ENCODE measurements at regions of chr2 and their contacts with region 1.

Region 1: GRCh38 chr2:61538200-61538919 is at the start of gene XPO1:
- DNase-seq: peak; percentile 94 to 100 (median 99)
- ATAC-seq: peak; percentile 74
- H3K4me3 ChIP-seq: peak within 1 kb of the TSS; percentile 83 to 92
- H3K4me3 Mint-ChIP-seq: peak within 1 kb of the TSS; percentile 92
- H3K27ac ChIP-seq: peak within 1 kb of the TSS; percentile 100
- H3K27ac Mint-ChIP-seq: peak within 1 kb of the TSS; percentile 99
- H3K4me1 ChIP-seq: peaks cover 23% of the 10 kb centered on the region
- H3K4me1 Mint-ChIP-seq: peaks cover 38% of the 10 kb centered on the region
- H3K27me3 ChIP-seq: no peaks in the 10 kb centered on the region
- H3K27me3 Mint-ChIP-seq: no peaks in the 10 kb centered on the region
- CTCF ChIP-seq: no peak
- total RNA-seq, gene XPO1: 96.6 TPM

Region 2: GRCh38 chr2:61016808-61017555 is 521.4 kb before region 1 on chr2:
- CTCF ChIA-PET with region 1: no interaction called
- POLR2A ChIA-PET with region 1: no interaction called
- intact Hi-C with region 1: loop called in 1 of 2 experiments (anchors 5 kb)
- DNase-seq: peak; percentile 30 to 81 (median 67)
- ATAC-seq: peak; percentile 69
- H3K4me3 ChIP-seq: peak overlapping the region; percentile 80 to 99
- H3K4me3 Mint-ChIP-seq: peak overlapping the region; percentile 99
- H3K27ac ChIP-seq: peak overlapping the region; percentile 69 to 84
- H3K27ac Mint-ChIP-seq: peak overlapping the region; percentile 95
- H3K4me1 ChIP-seq: peaks cover 21% of the 10 kb centered on the region
- H3K4me1 Mint-ChIP-seq: peaks cover 46% of the 10 kb centered on the region
- H3K27me3 ChIP-seq: no peaks in the 10 kb centered on the region
- H3K27me3 Mint-ChIP-seq: no peaks in the 10 kb centered on the region
- CTCF ChIP-seq: no peak

Region 3: DNA sequence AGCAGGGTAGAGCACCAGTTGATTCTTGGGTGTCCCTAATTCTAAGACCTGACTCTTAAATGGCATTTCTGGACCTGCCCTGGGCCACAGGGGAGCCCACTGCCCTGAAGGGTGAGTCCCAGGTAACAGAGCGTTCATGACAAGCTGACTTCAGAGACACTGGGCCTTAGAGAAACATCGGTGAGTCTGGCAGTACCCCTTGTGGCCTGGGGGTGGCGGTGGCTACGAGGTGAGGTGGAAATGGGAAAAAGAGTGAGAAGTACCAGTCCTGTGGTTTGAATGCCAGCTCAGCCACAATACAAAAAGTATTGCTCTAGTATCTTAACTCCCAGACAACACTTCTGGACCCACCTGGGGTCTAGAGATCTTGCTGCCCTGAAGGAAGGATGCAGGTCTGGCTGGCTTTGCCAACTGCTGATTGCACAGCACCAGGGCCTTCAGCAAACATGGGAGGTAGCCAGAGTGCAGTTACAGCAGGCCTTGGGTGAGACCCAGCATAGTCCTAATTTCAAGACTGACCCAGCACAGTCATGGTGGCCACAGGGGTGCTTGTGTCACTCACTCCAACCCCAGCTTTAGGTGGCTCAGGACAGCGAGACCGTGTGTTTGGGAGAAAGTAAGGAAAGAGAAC is 112.0 kb before region 1 on chr2:
- CTCF ChIA-PET with region 1: interaction called, 9 read pairs
- POLR2A ChIA-PET with region 1: interaction called, 16 read pairs
- intact Hi-C with region 1: loop called in 1 of 2 experiments (anchors 1 kb)
- DNase-seq: peak; percentile 51 to 87 (median 76)
- ATAC-seq: peak; percentile 91
- H3K4me3 ChIP-seq: no peak overlapping the region
- H3K4me3 Mint-ChIP-seq: peak overlapping the region; percentile 59
- H3K27ac ChIP-seq: peak overlapping the region; percentile 47 to 77
- H3K27ac Mint-ChIP-seq: peak overlapping the region; percentile 94
- H3K4me1 ChIP-seq: peaks cover 43% of the 10 kb centered on the region
- H3K4me1 Mint-ChIP-seq: peaks cover 72% of the 10 kb centered on the region
- H3K27me3 ChIP-seq: no peaks in the 10 kb centered on the region
- H3K27me3 Mint-ChIP-seq: no peaks in the 10 kb centered on the region
- CTCF ChIP-seq: peak; percentile 74

Region 4: GRCh38 chr2:61493523-61493942 is 44.8 kb before region 1 on chr2:
- CTCF ChIA-PET with region 1: no interaction called
- POLR2A ChIA-PET with region 1: interaction called, 4 read pairs
- intact Hi-C with region 1: loop called in 1 of 2 experiments (anchors 5 kb)
- DNase-seq: peak in 3 of 9 experiments; percentile 20 to 40 (median 21)
- ATAC-seq: no peak
- H3K4me3 ChIP-seq: no peak overlapping the region
- H3K4me3 Mint-ChIP-seq: no peak overlapping the region
- H3K27ac ChIP-seq: peak overlapping the region; percentile 12 to 38
- H3K27ac Mint-ChIP-seq: peak overlapping the region; percentile 75
- H3K4me1 ChIP-seq: peaks cover 17% of the 10 kb centered on the region
- H3K4me1 Mint-ChIP-seq: peaks cover 22% of the 10 kb centered on the region
- H3K27me3 ChIP-seq: no peaks in the 10 kb centered on the region
- H3K27me3 Mint-ChIP-seq: no peaks in the 10 kb centered on the region
- CTCF ChIP-seq: no peak

Region 5: GRCh38 chr2:61549546-61549945 is 11.2 kb after region 1 on chr2:
- CTCF ChIA-PET with region 1: no interaction called
- POLR2A ChIA-PET with region 1: interaction called, 12 read pairs
- intact Hi-C with region 1: no loop called
- DNase-seq: no peak
- ATAC-seq: no peak
- H3K4me3 ChIP-seq: no peak overlapping the region
- H3K4me3 Mint-ChIP-seq: no peak overlapping the region
- H3K27ac ChIP-seq: no peak overlapping the region
- H3K27ac Mint-ChIP-seq: no peak overlapping the region
- H3K4me1 ChIP-seq: no peaks in the 10 kb centered on the region
- H3K4me1 Mint-ChIP-seq: no peaks in the 10 kb centered on the region
- H3K27me3 ChIP-seq: no peaks in the 10 kb centered on the region
- H3K27me3 Mint-ChIP-seq: no peaks in the 10 kb centered on the region
- CTCF ChIP-seq: no peak

Region 6: DNA sequence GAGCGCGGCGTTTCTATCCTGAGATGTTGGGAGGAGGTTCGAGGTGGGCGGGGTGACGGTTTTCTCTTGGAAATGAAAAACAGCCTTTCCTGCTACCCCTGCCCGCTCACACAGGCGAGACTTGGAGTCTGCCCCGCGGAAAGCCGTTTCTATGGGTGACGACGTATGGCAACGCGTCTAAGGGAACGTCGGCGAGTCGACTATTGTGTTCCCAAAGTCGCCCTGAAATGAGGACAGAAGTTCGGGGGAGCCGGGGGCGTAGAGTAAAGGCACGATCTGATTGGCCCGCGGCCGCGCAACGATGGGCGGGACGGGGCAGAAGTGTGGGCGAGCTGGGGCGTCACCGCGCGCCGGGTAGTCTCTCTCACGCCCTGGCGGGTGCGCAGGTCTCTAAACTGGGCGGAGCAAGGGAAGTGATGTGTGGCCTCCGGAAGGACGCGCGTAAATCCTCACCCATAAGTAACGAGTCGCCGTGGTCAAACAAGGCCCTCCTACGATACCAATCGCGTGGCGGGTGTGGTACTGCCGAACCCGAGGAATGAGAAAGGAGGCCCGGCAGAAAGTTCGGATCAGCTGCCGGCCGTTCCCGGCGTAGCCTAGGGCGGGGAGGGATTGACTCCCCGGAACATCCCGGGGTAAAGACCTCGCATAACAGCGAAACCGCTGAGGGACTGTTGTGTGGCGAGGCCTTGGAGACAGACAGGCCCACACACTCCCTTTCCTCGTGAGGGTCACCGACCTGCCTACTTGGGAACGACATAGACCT is 225.9 kb after region 1 on chr2:
- CTCF ChIA-PET with region 1: no interaction called
- POLR2A ChIA-PET with region 1: interaction called, 15 read pairs
- intact Hi-C with region 1: loop called (anchors 1 kb)
- DNase-seq: peak; percentile 91 to 99 (median 94)
- ATAC-seq: peak; percentile 97
- H3K4me3 ChIP-seq: peak overlapping the region; percentile 90 to 91
- H3K4me3 Mint-ChIP-seq: peak overlapping the region; percentile 96
- H3K27ac ChIP-seq: peak overlapping the region; percentile 99 to 100
- H3K27ac Mint-ChIP-seq: peak overlapping the region; percentile 98
- H3K4me1 ChIP-seq: no peaks in the 10 kb centered on the region
- H3K4me1 Mint-ChIP-seq: peaks cover 12% of the 10 kb centered on the region
- H3K27me3 ChIP-seq: no peaks in the 10 kb centered on the region
- H3K27me3 Mint-ChIP-seq: no peaks in the 10 kb centered on the region
- CTCF ChIP-seq: no peak

Region 7: DNA sequence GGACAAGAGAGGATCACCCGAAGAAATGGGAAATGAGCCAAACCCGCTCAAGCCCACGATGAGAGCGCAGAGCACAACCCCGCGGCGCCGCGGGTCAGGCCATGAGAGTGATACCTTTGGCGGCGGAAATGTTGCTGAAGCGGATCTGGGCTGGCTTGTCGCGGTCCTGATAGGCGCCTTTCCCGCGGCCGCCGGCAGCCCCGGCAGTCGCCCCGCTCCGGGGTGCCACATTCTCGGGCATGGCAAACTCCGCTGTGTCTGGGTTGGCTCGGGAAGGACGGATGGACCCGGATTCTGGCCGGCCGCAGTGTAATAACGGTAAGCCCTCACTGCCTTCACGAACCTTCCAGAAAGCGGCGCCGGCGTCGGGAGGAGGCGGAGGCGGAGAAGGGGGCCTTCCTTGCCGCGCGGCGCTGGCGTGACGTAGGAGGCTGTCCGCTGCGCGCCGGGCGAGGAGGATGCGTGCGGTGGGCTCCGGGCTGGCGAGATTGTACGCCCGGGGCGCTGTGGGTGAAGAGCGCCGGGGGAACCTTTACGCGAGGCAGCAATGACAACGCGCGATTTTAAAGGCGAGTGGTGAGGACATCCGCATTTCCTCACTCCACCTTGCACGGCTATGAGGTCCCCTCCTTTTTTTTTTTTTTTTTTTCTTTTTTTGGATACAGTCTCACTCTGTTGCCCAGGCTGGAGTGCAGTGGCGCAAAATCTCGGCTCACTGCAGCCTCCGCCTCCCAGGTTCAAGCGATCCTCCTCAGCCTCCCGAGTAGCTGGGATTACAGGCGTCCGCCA is 350.1 kb after region 1 on chr2 and contains the start of gene CCT4:
- CTCF ChIA-PET with region 1: no interaction called
- POLR2A ChIA-PET with region 1: no interaction called
- intact Hi-C with region 1: loop called (anchors 1 to 2 kb)
- DNase-seq: peak; percentile 81 to 98 (median 92)
- ATAC-seq: peak; percentile 89
- H3K4me3 ChIP-seq: peak within 1 kb of the TSS; percentile 85 to 100
- H3K4me3 Mint-ChIP-seq: peak within 1 kb of the TSS; percentile 95
- H3K27ac ChIP-seq: peak within 1 kb of the TSS; percentile 99
- H3K27ac Mint-ChIP-seq: peak within 1 kb of the TSS; percentile 98
- H3K4me1 ChIP-seq: peaks cover 28% of the 10 kb centered on the region
- H3K4me1 Mint-ChIP-seq: peaks cover 33% of the 10 kb centered on the region
- H3K27me3 ChIP-seq: no peaks in the 10 kb centered on the region
- H3K27me3 Mint-ChIP-seq: no peaks in the 10 kb centered on the region
- CTCF ChIP-seq: no peak
- total RNA-seq, gene CCT4: 102 to 106 TPM

Region 8: DNA sequence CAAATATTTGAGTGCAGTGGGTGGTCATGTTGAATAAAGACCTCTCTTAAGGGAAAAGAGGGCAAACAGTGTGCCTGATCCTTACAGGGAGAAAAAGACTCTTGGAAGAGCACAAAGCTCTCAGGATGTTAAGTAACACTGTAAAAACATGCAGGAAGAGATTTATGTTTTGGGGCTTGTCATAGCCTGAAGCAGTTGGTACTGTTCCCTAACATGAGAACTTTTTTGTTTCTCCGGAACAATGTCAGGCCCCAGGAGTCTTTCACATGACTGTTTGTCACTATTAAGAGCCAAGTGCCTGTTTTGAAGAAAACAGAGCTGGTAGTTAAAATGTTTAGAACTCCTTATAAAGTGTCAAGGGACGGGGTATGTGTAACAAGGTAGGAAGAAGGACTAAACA is 573.8 kb after region 1 on chr2:
- CTCF ChIA-PET with region 1: no interaction called
- POLR2A ChIA-PET with region 1: no interaction called
- intact Hi-C with region 1: no loop called
- DNase-seq: no peak
- ATAC-seq: no peak
- H3K4me3 ChIP-seq: no peak overlapping the region
- H3K4me3 Mint-ChIP-seq: no peak overlapping the region
- H3K27ac ChIP-seq: no peak overlapping the region
- H3K27ac Mint-ChIP-seq: no peak overlapping the region
- H3K4me1 ChIP-seq: no peaks in the 10 kb centered on the region
- H3K4me1 Mint-ChIP-seq: peaks cover 8% of the 10 kb centered on the region
- H3K27me3 ChIP-seq: no peaks in the 10 kb centered on the region
- H3K27me3 Mint-ChIP-seq: no peaks in the 10 kb centered on the region
- CTCF ChIP-seq: no peak